Stomach (tissue), 19 donors: ENCODE measurements at regions of chr18 and their contacts with region 1.

Region 1: GRCh38 chr18:62128157-62128556 is 58.7 kb downstream of the PIGN start:
- DNase-seq: no peak
- H3K4me3 ChIP-seq: no peak overlapping the region
- H3K27ac ChIP-seq: no peak overlapping the region
- H3K4me1 ChIP-seq: no peaks in the 10 kb centered on the region
- H3K27me3 ChIP-seq: no peaks in the 10 kb centered on the region
- CTCF ChIP-seq: no peak
- EP300 ChIP-seq: no peak
- POLR2A ChIP-seq: no peak

Region 2: DNA sequence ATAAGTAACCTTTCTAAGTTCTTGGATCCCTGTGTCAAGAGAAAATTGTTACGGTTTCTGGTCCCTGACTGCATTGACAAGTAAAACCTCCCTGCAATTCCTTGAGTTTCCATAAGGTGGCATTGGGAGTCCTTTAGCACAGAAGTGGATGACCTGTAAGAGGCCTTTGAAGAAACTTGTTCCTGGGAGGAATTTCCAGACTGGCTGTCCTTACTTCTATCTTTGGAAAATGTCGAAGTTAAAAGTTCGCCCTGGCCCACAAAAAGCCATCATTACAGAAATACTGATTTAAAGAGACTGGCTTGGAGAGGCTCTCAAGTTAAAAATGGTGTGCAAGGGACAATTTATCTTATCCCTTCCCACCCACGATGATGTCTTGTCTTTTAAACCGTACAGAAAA is 576.6 kb before region 1 on chr18:
- intact Hi-C with region 1: loop called (anchors 10 kb)
- DNase-seq: peak in 1 of 2 donors; percentile 86
- H3K4me3 ChIP-seq: no peak overlapping the region
- H3K27ac ChIP-seq: no peak overlapping the region
- H3K4me1 ChIP-seq: no peaks in the 10 kb centered on the region
- H3K27me3 ChIP-seq: no peaks in the 10 kb centered on the region
- CTCF ChIP-seq: peak in 5 of 7 experiments; percentile 56 to 88 (median 80)
- EP300 ChIP-seq: no peak
- POLR2A ChIP-seq: no peak

Region 3: DNA sequence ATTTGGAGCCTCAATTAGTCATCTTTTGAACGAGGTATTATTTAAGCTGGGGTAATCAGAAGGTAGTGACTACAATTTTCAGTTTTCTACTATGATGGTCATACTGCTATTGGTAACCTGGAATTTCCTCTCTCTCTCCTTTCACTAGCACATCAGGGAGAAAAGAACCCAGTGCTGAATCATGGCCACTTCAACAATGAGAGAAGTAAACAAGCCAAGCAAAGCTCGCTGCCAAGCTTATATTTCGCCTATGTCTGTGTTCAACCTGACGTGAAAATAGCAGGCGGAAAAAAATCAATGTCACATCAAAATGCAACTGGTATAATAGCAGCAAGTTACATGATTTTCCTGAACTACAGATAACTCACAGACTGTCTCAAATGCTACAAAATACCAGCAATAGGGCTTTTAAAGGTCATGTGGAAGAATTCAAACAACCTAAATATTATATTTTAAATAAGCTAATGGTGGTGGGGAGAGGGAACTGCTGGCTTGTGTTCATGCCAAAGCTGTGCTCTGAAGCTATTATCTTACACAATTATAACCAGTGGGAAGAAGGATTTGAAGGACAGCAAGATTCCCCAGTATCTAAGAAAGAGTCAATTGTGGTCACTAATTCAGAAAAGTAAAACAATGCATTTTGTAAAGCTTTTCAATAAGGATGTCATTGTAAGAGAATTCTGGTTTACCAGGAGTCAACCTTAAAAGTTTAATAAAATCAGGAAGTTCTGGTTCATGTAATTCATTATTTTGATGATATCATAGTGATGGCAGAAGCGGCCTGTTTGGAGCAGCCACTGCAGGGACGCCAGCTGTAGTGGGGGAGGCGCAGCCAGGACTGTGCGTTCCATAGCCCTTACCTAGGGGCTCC is 273.3 kb before region 1 on chr18:
- intact Hi-C with region 1: no loop called
- DNase-seq: peak in 1 of 2 donors; percentile 37
- H3K4me3 ChIP-seq: no peak overlapping the region
- H3K27ac ChIP-seq: peak overlapping the region; percentile 15 to 83 (median 57)
- H3K4me1 ChIP-seq: peaks cover 24 to 94% (median 57%) of the 10 kb centered on the region in 4 donors
- H3K27me3 ChIP-seq: no peaks in the 10 kb centered on the region
- CTCF ChIP-seq: no peak
- EP300 ChIP-seq: no peak
- POLR2A ChIP-seq: no peak